Right ventricle myocardium inferior (tissue), 1 donor: ENCODE measurements at regions of chr19 and their contacts with region 1.

Region 1: GRCh38 chr19:56748378-56748777 is 76.8 kb upstream of the ZNF835 start:
- DNase-seq: no peak
- ATAC-seq: peak; percentile 37

Region 2: GRCh38 chr19:56838909-56839651 is 90.7 kb after region 1 on chr19:
- intact Hi-C with region 1: loop called (anchors 5 kb)
- DNase-seq: peak; percentile 96
- ATAC-seq: peak; percentile 71

Region 3: DNA sequence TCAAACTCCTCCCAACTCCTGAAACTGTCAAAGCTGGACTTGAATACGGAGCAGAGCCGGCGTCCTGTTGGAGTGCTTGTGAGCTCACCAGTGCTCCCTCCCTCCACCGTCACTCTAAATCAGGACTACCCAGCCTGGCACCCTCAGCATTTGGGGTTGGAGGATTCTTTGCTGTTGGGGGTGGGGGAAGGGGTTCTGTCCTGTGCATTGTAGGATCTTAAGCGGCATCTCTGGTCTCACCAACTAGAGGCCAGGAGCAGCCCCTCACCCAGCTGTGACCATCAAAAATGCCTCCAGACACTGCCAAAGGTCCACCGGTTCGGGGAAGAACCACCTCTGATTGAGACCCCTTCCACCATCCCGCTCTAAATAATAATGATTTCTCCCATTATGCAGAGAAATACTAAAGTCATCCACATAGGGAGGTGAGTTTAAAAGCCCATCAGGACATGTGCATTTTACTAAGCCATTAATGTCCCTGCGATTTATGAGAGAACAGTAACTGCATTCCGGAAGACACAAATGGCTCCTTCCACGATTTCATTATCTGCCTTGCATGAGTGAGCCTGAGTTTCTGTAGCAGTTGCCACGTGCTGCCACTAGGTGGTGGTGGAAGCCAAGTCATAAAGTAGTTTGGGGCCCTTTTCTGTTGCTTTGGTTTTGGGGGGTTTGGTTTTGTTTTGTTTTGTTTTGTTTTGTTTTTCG is 355.3 kb after region 1 on chr19:
- intact Hi-C with region 1: loop called (anchors 5 kb)
- DNase-seq: no peak
- ATAC-seq: peak; percentile 56